Left cardiac atrium (tissue), 4 donors: ENCODE measurements at regions of chr1 and their contacts with region 1.

Region 1: GRCh38 chr1:15051882-15052528 is 101.5 kb upstream of the TMEM51 start:
- DNase-seq: no peak
- ATAC-seq: no peak

Region 2: DNA sequence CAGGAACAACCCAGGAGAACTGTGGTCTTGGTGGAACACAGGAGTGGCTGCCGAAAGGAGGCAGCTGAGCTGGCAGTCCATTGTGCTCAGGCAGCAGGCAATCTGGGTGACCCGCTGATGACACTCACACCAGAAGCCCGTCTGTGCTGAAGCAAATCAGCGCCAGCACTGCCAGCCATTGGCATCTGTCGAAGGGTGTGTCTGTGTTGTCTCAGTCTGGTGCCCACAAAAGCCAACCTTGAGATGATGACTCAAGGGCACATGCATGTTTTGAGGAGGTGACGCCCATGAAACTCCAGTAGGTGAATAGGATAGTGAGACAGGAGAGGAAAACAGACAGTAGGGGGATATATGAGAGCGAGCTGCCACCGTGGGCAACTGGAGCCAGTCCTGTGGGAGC is 286.2 kb before region 1 on chr1:
- intact Hi-C with region 1: loop called in 1 of 2 experiments (anchors 5 kb)
- DNase-seq: no peak
- ATAC-seq: no peak

Region 3: GRCh38 chr1:15231714-15232201 is 179.8 kb after region 1 on chr1:
- intact Hi-C with region 1: no loop called
- DNase-seq: no peak
- ATAC-seq: peak in 1 of 2 donors; percentile 14